Heart right ventricle (tissue), 16 donors: ENCODE measurements at regions of chr17 and their contacts with region 1.

Region 1: GRCh38 chr17:4087906-4088693 is 54.7 kb downstream of the ZZEF1 start:
- DNase-seq: no peak
- ATAC-seq: no peak
- H3K4me3 ChIP-seq: no peak overlapping the region
- H3K27ac ChIP-seq: no peak overlapping the region
- H3K4me1 ChIP-seq: peaks cover 0 to 15% (median 0%) of the 10 kb centered on the region in 9 donors
- H3K27me3 ChIP-seq: no peaks in the 10 kb centered on the region
- CTCF ChIP-seq: no peak

Region 2: GRCh38 chr17:4035081-4035680 is 52.9 kb before region 1 on chr17:
- intact Hi-C with region 1: loop called in 1 of 10 experiments (anchors 10 kb)
- DNase-seq: no peak
- ATAC-seq: peak in 1 of 8 donors; percentile 12
- H3K4me3 ChIP-seq: no peak overlapping the region
- H3K27ac ChIP-seq: no peak overlapping the region
- H3K4me1 ChIP-seq: no peaks in the 10 kb centered on the region
- H3K27me3 ChIP-seq: no peaks in the 10 kb centered on the region
- CTCF ChIP-seq: no peak

Region 3: DNA sequence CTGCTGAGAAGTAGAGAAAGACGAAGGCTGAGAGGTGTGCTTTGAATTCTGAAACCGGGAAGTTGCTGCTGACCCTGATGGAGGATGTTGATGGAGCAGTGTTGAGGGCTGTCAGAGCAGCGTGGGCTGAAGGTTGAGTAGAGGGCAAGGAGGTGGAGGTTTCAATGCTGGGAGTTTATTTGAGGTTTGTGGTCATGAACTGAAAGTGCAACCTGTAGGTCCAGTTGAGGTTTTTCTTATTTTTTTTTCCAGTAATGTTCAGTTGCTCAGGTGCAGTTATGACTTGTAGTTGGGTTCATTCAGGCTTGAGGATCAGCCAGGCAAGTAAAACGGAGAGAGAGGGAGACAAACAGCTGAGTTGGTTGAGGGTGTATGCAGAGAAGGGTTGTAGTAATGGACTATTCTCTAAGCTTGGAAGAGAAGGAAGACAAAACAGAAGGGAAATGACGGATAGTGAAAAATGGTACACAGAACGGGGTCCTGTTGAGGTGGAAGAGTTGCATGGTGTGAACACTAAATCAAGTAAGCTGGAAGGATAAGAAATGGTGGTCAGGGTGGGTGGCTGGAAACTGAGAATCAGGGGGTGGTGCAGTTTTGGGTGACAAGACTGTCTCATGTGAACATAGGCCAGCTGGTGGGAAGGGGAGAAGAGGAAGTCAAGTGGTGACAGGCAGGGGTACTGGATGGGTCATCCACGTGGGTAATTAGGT is 287.1 kb after region 1 on chr17:
- intact Hi-C with region 1: no loop called
- DNase-seq: no peak
- ATAC-seq: no peak
- H3K4me3 ChIP-seq: no peak overlapping the region
- H3K27ac ChIP-seq: no peak overlapping the region
- H3K4me1 ChIP-seq: no peaks in the 10 kb centered on the region
- H3K27me3 ChIP-seq: no peaks in the 10 kb centered on the region
- CTCF ChIP-seq: no peak